ENCODE measurements at regions of chr17 and their contacts with region 1.

Region 1: DNA sequence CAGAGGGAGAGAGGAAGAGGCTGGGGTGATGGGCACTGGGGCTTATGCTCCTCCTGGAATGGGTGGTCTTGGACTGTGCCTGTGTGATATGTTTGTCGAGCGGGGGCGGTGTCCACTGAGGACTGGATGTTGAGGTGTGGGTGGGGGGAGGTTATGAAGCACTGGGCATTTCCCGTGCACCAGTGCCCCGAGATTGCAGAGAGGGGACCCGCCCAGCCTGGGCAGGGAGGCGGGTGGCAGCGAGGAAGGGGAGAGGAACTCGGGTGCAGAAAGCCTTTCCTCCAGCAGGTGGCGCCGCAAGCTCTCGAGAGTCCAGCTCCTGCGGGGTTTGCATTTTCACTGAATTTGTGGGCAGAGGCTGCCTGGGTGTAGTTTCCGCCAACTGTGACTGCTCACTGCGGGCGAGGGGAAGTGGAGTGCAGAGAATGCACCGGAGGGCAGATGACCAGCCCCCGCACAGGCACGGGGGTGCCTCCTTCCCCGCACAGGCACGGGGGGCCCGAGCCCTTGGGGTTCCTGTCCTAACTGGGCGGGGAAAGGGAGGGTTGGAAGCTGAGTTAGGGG is 190.6 kb downstream of the SEC14L1 start:
- DNase-seq: peak; percentile 97
- ATAC-seq: peak; percentile 95

Region 2: DNA sequence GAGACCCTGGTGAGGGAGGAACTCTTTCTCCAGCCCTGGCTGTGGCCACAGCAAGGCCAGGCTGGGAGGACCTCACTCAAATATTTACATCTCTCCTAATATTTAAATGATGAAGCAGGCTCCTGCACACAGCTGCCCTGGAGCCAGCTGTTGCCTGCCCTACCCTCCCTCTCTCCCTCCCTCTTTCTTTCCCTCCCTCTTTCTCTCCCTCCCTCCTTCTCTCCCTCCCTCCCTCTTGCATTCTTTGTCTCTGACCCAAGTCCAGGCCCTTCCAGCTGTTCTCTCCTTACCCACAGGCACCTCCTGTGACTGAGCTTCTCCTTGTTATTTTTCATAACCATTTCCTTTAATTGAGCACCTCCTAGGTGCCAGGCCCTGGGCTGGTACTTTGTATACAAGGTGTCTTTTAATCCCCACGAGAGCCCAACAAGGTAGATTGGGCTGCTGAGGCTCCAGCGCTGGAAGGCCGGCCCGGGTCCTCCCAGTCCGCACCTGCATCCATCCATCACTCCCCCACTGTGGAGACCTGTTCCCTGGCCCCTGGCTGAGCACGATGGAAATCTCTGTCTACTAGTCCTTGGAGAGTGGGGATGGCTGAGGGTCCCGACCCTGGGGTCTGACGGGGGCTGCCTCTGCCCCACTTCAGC is 51.7 kb after region 1 on chr17:
- intact Hi-C with region 1: loop called (anchors 10 kb)
- DNase-seq: no peak
- ATAC-seq: no peak

Region 3: DNA sequence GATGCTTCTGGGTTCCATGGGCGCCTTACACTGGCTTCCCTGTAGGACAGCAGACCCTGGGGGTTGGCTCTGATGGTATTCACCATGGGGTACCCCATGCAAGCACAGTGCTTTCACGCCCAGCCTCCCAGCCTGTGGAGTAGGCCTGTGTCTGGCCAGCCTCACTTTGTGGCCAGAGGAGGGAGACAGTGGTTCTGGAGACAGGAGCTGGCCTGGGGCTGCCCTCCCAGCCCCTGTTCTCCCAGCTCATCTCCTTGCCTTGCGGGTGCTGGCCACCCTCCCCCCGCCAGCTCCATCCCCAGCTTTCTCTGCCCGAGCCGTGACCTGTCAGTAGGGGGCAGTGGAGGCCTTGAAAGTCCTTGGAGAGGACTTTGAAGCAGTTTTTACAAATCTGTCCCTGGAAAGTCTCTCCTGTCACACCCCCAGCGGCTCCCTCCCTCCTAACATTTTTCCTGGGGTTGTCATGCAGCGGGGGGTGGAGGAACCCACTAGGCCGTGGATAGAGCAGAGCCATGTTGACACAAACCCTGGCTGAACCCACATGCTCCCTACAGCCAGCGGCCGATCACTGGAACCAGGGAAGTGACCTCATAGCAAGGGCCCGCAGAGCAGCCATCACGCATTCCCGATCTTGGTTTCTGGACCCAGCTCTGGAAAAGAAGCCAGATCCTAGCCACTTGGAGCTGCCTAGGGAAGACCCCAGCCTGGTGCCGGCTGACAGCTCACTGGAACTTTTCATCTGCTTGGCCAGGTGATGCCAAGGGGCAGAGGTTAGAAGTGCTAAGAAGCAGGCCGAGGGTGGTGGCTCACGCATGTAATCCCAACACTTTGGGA is 98.8 kb after region 1 on chr17:
- intact Hi-C with region 1: loop called (anchors 5 kb)
- DNase-seq: peak; percentile 92
- ATAC-seq: peak; percentile 79

Region 4: GRCh38 chr17:77494664-77495435 is 163.5 kb after region 1 on chr17:
- intact Hi-C with region 1: loop called (anchors 2 kb)
- DNase-seq: peak; percentile 89
- ATAC-seq: peak; percentile 72